ENCODE measurements at regions of chr7 and their contacts with region 1.

Region 1: DNA sequence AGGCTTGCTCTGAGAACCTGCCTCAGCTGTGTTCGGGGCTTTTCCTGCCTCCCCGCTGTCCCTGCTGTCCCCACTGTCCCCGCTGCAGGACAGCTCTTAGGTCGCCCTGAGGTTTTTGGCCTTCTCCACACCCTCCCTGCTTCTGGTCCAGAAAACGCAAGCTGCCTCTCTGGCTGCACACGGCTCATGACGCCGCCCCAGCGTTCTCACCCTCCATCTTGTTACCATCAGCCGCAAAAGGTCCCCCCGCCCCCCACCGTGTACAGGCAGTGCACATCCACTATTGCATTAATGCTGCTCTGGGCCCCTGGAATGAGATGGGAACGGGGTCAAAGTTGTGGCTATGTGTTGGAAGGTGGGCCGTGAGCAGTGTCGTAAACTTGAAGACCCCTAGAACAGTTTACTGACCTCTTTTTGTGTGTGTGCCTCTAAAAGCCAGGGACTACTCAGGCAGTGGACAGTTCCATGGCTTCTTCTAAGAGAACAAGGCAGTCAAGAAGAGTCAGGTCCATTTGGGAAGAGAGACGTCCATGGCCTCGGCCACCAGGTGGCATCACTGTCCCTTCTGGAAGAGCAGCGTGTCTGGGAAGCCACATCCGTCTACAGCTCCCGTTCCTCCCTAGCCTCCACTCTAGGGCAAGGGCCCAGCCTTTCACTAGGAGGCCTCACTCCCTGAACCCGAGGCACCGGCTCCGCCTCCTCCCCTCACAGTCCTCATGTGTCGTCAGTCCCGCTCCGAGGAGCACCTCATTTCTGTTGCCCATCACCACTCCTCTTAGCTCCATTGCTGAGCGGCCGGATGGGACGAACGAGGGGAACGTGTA is 38.5 kb upstream of the MKRN1 start:
- DNase-seq: peak; percentile 31 to 79 (median 56)
- ATAC-seq: peak; percentile 81
- H3K4me3 ChIP-seq: no peak overlapping the region
- H3K4me3 Mint-ChIP-seq: no peak overlapping the region
- H3K27ac ChIP-seq: no peak overlapping the region
- H3K27ac Mint-ChIP-seq: no peak overlapping the region
- H3K4me1 ChIP-seq: peaks cover 5% of the 10 kb centered on the region
- H3K4me1 Mint-ChIP-seq: peaks cover 4% of the 10 kb centered on the region
- H3K27me3 ChIP-seq: no peaks in the 10 kb centered on the region
- H3K27me3 Mint-ChIP-seq: peaks cover 10% of the 10 kb centered on the region
- CTCF ChIP-seq: peak; percentile 72

Region 2: GRCh38 chr7:140653319-140654108 is 135.8 kb after region 1 on chr7:
- CTCF ChIA-PET with region 1: no interaction called
- POLR2A ChIA-PET with region 1: no interaction called
- intact Hi-C with region 1: loop called (anchors 1 kb)
- DNase-seq: peak in 6 of 14 experiments; percentile 15 to 69 (median 47)
- ATAC-seq: no peak
- H3K4me3 ChIP-seq: no peak overlapping the region
- H3K4me3 Mint-ChIP-seq: no peak overlapping the region
- H3K27ac ChIP-seq: no peak overlapping the region
- H3K27ac Mint-ChIP-seq: no peak overlapping the region
- H3K4me1 ChIP-seq: peaks cover 20% of the 10 kb centered on the region
- H3K4me1 Mint-ChIP-seq: peaks cover 18% of the 10 kb centered on the region
- H3K27me3 ChIP-seq: no peaks in the 10 kb centered on the region
- H3K27me3 Mint-ChIP-seq: peaks cover 42% of the 10 kb centered on the region
- CTCF ChIP-seq: peak; percentile 95